ENCODE measurements at regions of chr17 and their contacts with region 1.

Region 1: DNA sequence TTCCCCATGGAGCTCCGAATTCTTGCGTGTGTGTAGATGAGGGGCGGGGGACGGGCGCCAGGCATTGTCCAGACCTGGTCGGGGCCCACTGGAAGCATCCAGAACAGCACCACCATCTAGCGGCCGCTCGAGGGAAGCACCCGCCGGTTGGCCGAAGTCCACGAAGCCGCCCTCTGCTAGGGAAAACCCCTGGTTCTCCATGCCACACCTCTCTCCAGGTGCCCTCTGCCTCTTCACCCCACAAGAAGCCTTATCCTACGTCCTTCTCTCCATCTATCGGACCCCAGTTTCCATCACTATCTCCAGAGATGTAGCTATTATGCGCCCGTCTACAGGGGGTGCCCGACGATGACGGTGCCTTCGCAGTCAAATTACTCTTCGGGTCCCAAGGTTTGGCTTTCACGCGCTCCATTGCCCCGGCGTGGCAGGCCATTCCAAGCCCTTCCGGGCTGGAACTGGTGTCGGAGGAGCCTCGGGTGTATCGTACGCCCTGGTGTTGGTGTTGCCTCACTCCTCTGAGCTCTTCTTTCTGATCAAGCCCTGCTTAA is 617 bp upstream of the SENP3 start:
- DNase-seq: peak; percentile 74 to 85 (median 81)
- H3K4me3 ChIP-seq: peak overlapping the region; percentile 95
- H3K4me3 Mint-ChIP-seq: peak overlapping the region; percentile 88 to 97 (median 89)
- H3K27ac ChIP-seq: peak overlapping the region; percentile 94
- H3K27ac Mint-ChIP-seq: peak overlapping the region; percentile 91 to 99 (median 98)
- H3K4me1 ChIP-seq: peaks cover 37% of the 10 kb centered on the region
- H3K4me1 Mint-ChIP-seq: peaks cover 23 to 33% (median 25%) of the 10 kb centered on the region in 3 donors
- H3K27me3 ChIP-seq: no peaks in the 10 kb centered on the region
- H3K27me3 Mint-ChIP-seq: peaks cover 0 to 4% of the 10 kb centered on the region in 2 donors

Region 2: GRCh38 chr17:7336240-7337175 is 224.6 kb before region 1 on chr17 and contains the start of gene ACAP1:
- CTCF ChIA-PET with region 1: interaction called, 4 read pairs
- POLR2A ChIA-PET with region 1: interaction called, 11 read pairs
- DNase-seq: peak; percentile 78 to 90 (median 81)
- H3K4me3 ChIP-seq: peak within 1 kb of the TSS; percentile 99
- H3K4me3 Mint-ChIP-seq: peak within 1 kb of the TSS; percentile 88 to 98 (median 93)
- H3K27ac ChIP-seq: peak within 1 kb of the TSS; percentile 74
- H3K27ac Mint-ChIP-seq: peak within 1 kb of the TSS; percentile 89 to 98 (median 97)
- H3K4me1 ChIP-seq: peaks cover 69% of the 10 kb centered on the region
- H3K4me1 Mint-ChIP-seq: peaks cover 47 to 68% (median 66%) of the 10 kb centered on the region in 3 donors
- H3K27me3 ChIP-seq: no peaks in the 10 kb centered on the region
- H3K27me3 Mint-ChIP-seq: no peaks in the 10 kb centered on the region
- total RNA-seq, gene ACAP1: 216 to 225 TPM

Region 3: GRCh38 chr17:7484067-7484918 is 76.8 kb before region 1 on chr17 and contains the start of gene POLR2A:
- CTCF ChIA-PET with region 1: interaction called, 14 read pairs
- POLR2A ChIA-PET with region 1: interaction called, 6 read pairs
- DNase-seq: peak; percentile 95 to 99 (median 98)
- H3K4me3 ChIP-seq: peak within 1 kb of the TSS; percentile 91
- H3K4me3 Mint-ChIP-seq: peak within 1 kb of the TSS; percentile 96 to 100 (median 98)
- H3K27ac ChIP-seq: peak within 1 kb of the TSS; percentile 98
- H3K27ac Mint-ChIP-seq: peak within 1 kb of the TSS; percentile 99 to 100 (median 100)
- H3K4me1 ChIP-seq: peaks cover 49% of the 10 kb centered on the region
- H3K4me1 Mint-ChIP-seq: peaks cover 56 to 80% (median 73%) of the 10 kb centered on the region in 3 donors
- H3K27me3 ChIP-seq: no peaks in the 10 kb centered on the region
- H3K27me3 Mint-ChIP-seq: peaks cover 0 to 12% of the 10 kb centered on the region in 2 donors
- total RNA-seq, gene POLR2A: 190 to 192 TPM

Region 4: GRCh38 chr17:7523033-7523432 is 38.1 kb before region 1 on chr17:
- CTCF ChIA-PET with region 1: interaction called, 37 read pairs
- POLR2A ChIA-PET with region 1: interaction called, 10 read pairs
- DNase-seq: peak; percentile 31 to 62 (median 37)
- H3K4me3 ChIP-seq: no peak overlapping the region
- H3K4me3 Mint-ChIP-seq: no peak overlapping the region
- H3K27ac ChIP-seq: no peak overlapping the region
- H3K27ac Mint-ChIP-seq: no peak overlapping the region
- H3K4me1 ChIP-seq: no peaks in the 10 kb centered on the region
- H3K4me1 Mint-ChIP-seq: peaks cover 0 to 5% (median 2%) of the 10 kb centered on the region in 3 donors
- H3K27me3 ChIP-seq: no peaks in the 10 kb centered on the region
- H3K27me3 Mint-ChIP-seq: no peaks in the 10 kb centered on the region

Region 5: DNA sequence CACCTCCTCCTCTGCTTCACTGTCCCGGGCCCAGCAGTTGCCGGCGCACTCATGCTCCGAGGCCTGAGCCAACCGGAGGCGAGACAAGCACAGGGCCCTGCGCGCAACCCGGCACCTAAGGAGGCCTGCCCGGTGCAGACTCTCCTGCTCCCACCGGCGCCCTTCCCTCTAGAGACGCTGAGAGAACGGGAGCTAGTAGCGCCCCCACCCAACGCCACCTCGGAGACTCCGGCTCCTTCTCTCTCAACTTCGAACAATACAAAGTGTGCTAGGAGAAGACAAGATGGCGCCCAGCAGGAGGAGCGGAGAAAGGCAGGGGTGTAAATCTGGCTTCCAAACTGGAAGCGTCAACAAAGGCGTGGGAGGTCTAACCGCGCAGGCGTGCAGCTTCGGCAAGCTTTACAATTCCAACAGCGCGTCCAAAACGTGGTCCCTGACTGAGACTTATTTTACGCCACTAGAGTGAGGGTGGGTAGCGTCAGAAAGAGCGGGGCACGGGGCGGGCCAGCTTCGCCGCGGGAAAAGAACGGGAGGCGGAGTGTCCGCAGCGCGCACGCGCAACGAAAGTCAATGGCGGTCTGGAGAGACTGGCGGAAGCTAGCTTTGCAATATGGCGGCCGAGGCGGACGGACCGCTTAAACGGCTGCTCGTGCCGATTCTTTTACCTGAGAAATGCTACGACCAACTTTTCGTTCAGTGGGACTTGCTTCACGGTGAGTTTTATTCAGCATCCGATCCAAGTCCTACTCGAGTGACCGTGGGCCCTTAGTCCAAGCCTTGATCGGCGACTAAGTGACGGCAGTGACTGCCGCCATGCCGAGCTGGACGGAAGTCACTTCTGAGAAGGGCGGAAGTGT is 22.4 kb after region 1 on chr17 and contains the start of gene MPDU1:
- CTCF ChIA-PET with region 1: interaction called, 15 read pairs
- POLR2A ChIA-PET with region 1: interaction called, 7 read pairs
- DNase-seq: peak; percentile 90 to 97 (median 96)
- H3K4me3 ChIP-seq: peak within 1 kb of the TSS; percentile 98
- H3K4me3 Mint-ChIP-seq: peak within 1 kb of the TSS; percentile 99 to 100 (median 99)
- H3K27ac ChIP-seq: peak within 1 kb of the TSS; percentile 98
- H3K27ac Mint-ChIP-seq: peak within 1 kb of the TSS; percentile 99 to 100 (median 100)
- H3K4me1 ChIP-seq: peaks cover 40% of the 10 kb centered on the region
- H3K4me1 Mint-ChIP-seq: peaks cover 50 to 60% (median 52%) of the 10 kb centered on the region in 3 donors
- H3K27me3 ChIP-seq: no peaks in the 10 kb centered on the region
- H3K27me3 Mint-ChIP-seq: peaks cover 0 to 4% of the 10 kb centered on the region in 2 donors
- total RNA-seq, gene MPDU1: 115 to 124 TPM

Region 6: DNA sequence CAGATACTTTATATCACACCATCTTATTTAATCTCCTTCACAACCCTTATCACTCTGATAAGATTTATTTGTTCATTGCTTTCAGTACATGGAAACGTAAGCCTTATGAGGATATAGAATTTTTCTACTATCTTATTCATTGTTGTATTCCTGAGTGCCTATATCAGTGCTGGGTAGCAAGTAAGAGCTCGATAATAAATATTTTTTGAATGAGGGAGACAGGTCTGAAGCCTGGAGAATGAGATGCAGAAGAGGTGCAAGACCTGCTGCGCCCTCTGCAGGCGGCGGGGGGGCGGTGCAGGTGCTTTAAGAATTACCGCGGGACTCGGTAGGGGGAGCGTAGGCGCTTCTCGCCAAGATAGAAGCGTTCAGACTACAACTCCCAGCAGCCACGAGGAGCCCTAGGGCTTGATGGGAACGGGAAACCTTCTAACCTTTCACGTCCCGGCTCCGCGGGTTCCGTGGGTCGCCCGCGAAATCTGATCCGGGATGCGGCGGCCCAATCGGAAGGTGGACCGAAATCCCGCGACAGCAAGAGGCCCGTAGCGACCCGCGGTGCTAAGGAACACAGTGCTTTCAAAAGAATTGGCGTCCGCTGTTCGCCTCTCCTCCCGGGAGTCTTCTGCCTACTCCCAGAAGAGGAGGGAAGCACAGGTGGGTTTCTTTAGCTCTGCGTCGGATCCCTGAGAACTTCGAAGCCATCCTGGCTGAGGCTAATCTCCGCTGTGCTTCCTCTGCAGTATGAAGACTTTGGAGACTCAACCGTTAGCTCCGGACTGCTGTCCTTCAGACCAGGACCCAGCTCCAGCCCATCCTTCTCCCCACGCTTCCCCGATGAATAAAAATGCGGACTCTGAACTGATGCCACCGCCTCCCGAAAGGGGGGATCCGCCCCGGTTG is 127.1 kb after region 1 on chr17 and contains the start of gene WRAP53:
- CTCF ChIA-PET with region 1: interaction called, 30 read pairs
- POLR2A ChIA-PET with region 1: interaction called, 9 read pairs
- DNase-seq: peak; percentile 88 to 96 (median 94)
- H3K4me3 ChIP-seq: peak within 1 kb of the TSS; percentile 99
- H3K4me3 Mint-ChIP-seq: peak within 1 kb of the TSS; percentile 93 to 99 (median 98)
- H3K27ac ChIP-seq: peak within 1 kb of the TSS; percentile 99
- H3K27ac Mint-ChIP-seq: peak within 1 kb of the TSS; percentile 98 to 100 (median 100)
- H3K4me1 ChIP-seq: peaks cover 37% of the 10 kb centered on the region
- H3K4me1 Mint-ChIP-seq: peaks cover 39 to 55% (median 44%) of the 10 kb centered on the region in 3 donors
- H3K27me3 ChIP-seq: no peaks in the 10 kb centered on the region
- H3K27me3 Mint-ChIP-seq: peaks cover 0 to 7% of the 10 kb centered on the region in 2 donors
- total RNA-seq, gene WRAP53: 29.1 to 31.3 TPM

Measured in CD8-positive, alpha-beta memory T cell (primary cell).